GM13976 (cell line): ENCODE measurements at regions of chr7 and their contacts with region 1.

Region 1: GRCh38 chr7:55641273-55641691 is 69.0 kb upstream of the VOPP1 start:
- DNase-seq: peak; percentile 51
- CTCF ChIP-seq: peak; percentile 48

Region 2: GRCh38 chr7:55964261-55965099 is 323.2 kb after region 1 on chr7 and contains the start of gene NIPSNAP2:
- in situ Hi-C with region 1: loop called (anchors 10 kb)
- DNase-seq: peak; percentile 91
- CTCF ChIP-seq: peak; percentile 96

Region 3: GRCh38 chr7:56092789-56093531 is 451.7 kb after region 1 on chr7 and contains the start of gene PHKG1:
- in situ Hi-C with region 1: loop called (anchors 25 kb)
- DNase-seq: peak; percentile 19
- CTCF ChIP-seq: no peak